ENCODE measurements at regions of chr20 and their contacts with region 1.

Region 1: GRCh38 chr20:24662752-24663365 is 193.4 kb downstream of the SYNDIG1 start:
- DNase-seq: no peak
- H3K4me3 ChIP-seq: no peak overlapping the region
- H3K27ac ChIP-seq: no peak overlapping the region
- H3K4me1 ChIP-seq: peaks cover 4% of the 10 kb centered on the region
- H3K27me3 ChIP-seq: no peaks in the 10 kb centered on the region
- CTCF ChIP-seq: no peak
- POLR2A ChIP-seq: no peak

Region 2: DNA sequence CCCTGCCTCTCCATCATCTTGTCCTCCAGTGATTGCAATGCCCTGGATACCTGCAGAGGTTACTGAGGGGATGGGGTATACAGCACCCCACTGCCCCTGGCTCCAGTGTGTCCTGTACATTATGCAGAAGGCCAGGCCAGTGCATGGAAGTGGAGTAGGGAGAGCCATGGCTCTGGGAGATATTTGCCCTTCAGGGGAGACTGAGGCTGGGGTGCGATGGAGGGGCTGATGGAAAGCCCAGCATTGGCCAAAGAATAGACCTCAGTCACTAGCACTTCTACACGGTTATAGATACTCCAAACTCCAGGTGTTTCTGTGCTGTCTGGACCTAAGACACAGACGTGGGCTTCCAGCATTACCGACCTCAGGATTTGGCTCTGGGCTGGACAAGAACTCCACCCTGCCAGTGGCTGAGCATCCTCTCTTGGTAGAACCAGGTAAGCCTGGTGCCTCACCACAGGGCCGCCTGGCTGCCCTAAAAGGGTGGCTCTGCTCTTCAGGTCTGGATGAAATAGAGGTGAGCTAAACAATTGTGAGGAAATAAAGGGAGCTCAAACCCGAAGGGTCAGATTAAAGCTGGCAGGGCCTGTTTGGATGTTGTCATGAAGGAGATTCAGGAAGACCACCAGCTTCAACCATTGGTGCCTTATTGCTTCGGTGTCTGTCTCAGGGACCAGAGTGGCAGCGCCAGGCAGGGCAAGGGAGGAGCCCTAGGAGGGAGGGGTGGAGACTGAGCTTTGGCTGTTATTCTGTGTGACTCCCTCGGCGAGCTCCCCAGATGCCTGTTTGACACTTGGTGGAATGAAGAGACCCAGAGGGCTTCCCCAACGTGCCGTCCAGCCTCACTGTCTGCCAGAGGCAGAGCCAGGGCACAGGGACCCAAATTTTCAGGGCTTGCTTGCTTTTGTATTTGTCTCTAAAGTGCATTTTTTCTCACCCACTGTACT is 185.0 kb before region 1 on chr20:
- intact Hi-C with region 1: no loop called
- DNase-seq: no peak
- H3K4me3 ChIP-seq: no peak overlapping the region
- H3K27ac ChIP-seq: no peak overlapping the region
- H3K4me1 ChIP-seq: no peaks in the 10 kb centered on the region
- H3K27me3 ChIP-seq: no peaks in the 10 kb centered on the region
- CTCF ChIP-seq: no peak
- POLR2A ChIP-seq: no peak

Region 3: GRCh38 chr20:24738981-24739633 is 76.2 kb after region 1 on chr20:
- intact Hi-C with region 1: loop called (anchors 10 kb)
- DNase-seq: no peak
- H3K4me3 ChIP-seq: no peak overlapping the region
- H3K27ac ChIP-seq: no peak overlapping the region
- H3K4me1 ChIP-seq: no peaks in the 10 kb centered on the region
- H3K27me3 ChIP-seq: no peaks in the 10 kb centered on the region
- CTCF ChIP-seq: no peak
- POLR2A ChIP-seq: no peak